ENCODE measurements at regions of chr6 and their contacts with region 1.

Region 1: GRCh38 chr6:149648148-149649145 is at the start of gene KATNA1:
- DNase-seq: peak; percentile 93
- H3K4me3 ChIP-seq: peak within 1 kb of the TSS; percentile 84
- H3K27ac ChIP-seq: peak within 1 kb of the TSS; percentile 98
- H3K4me1 ChIP-seq: peaks cover 58% of the 10 kb centered on the region
- CTCF ChIP-seq: 0 out of 2 replicates have a peak, but pooled peaks have one; percentile 21
- total RNA-seq, gene KATNA1: 35.1 and 40.9 TPM in 2 replicates

Region 2: GRCh38 chr6:149373511-149373910 is 274.9 kb before region 1 on chr6:
- CTCF ChIA-PET with region 1: no interaction called
- POLR2A ChIA-PET with region 1: no interaction called
- intact Hi-C with region 1: no loop called
- DNase-seq: no peak
- H3K4me3 ChIP-seq: no peak overlapping the region
- H3K27ac ChIP-seq: no peak overlapping the region
- H3K4me1 ChIP-seq: peaks cover 42% of the 10 kb centered on the region
- CTCF ChIP-seq: no peak

Region 3: GRCh38 chr6:149545754-149546528 is 102.5 kb before region 1 on chr6 and contains the start of gene PPIL4:
- CTCF ChIA-PET with region 1: no interaction called
- POLR2A ChIA-PET with region 1: interaction called, 5 read pairs
- intact Hi-C with region 1: loop called (anchors 1 kb)
- DNase-seq: peak; percentile 96
- H3K4me3 ChIP-seq: peak within 1 kb of the TSS; percentile 92
- H3K27ac ChIP-seq: peak within 1 kb of the TSS; percentile 86
- H3K4me1 ChIP-seq: peaks cover 26% of the 10 kb centered on the region
- CTCF ChIP-seq: peak; percentile 100
- total RNA-seq, gene PPIL4: 21.6 and 29.2 TPM in 2 replicates

Region 4: GRCh38 chr6:149660028-149660427 is 11.6 kb after region 1 on chr6:
- CTCF ChIA-PET with region 1: interaction called, 5 read pairs
- POLR2A ChIA-PET with region 1: interaction called, 14 read pairs
- intact Hi-C with region 1: no loop called
- DNase-seq: no peak
- H3K4me3 ChIP-seq: no peak overlapping the region
- H3K27ac ChIP-seq: no peak overlapping the region
- H3K4me1 ChIP-seq: no peaks in the 10 kb centered on the region
- CTCF ChIP-seq: no peak

Region 5: DNA sequence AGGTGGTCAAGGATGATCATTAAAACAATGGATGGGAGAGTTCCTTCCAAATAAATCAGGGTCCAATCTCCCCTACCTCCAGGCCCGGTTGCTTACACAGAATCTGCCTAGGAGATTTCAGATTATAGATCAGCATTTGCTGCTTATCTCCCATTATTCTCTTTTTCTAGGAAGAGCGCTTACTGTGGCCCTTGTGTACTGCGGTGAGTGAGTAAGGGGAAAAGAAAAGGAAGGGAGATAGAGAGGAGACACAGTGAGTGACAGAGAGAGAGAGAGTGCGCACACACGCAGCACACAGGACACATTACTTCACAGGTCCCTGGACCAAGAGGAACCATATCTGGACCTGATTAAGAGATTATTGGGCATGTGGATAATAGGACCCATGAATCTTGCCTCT is 63.3 kb after region 1 on chr6:
- CTCF ChIA-PET with region 1: no interaction called
- POLR2A ChIA-PET with region 1: no interaction called
- intact Hi-C with region 1: loop called (anchors 2 kb)
- DNase-seq: no peak
- H3K4me3 ChIP-seq: no peak overlapping the region
- H3K27ac ChIP-seq: no peak overlapping the region
- H3K4me1 ChIP-seq: peaks cover 42% of the 10 kb centered on the region
- CTCF ChIP-seq: no peak

Region 6: DNA sequence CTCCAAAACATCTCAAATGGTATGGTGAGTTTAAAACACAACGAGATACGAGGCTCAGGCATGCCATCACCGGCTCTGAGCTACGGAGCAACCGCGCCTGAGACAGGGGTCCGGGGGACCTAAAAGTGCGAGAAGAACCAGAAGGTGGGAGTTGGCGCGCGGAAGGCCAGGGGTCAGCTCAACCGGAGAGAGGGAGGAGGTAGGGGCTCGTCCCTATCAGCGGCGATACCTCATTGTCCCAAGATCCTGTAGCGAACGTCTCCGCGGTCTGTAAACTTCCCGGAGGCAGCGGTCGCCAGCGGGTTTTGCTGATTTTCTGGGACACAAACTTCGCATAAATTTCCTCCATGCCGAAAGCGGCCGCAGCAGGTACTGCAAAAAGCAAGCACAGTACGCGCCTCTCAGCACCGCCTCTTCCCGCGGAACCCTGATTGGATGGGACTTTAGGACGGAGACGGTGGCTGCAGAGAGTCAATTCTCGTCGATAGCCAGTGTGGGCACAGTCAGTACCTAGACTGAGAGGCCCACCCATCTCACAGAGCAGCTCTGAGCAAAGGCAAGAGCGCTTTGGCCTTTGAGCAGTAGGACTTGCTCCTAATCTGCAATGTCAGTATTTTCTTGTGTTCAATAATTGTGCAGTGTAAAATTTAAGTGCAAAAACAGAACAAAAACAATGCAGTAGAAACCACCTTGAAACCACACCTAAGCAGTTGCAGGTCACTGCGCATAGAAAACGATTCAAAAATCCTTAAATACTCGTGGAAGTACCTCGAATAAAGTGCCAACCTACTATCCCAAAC is 97.9 kb after region 1 on chr6 and contains the start of gene NUP43:
- CTCF ChIA-PET with region 1: no interaction called
- POLR2A ChIA-PET with region 1: interaction called, 3 read pairs
- intact Hi-C with region 1: loop called (anchors 5 kb)
- DNase-seq: peak; percentile 96
- H3K4me3 ChIP-seq: peak within 1 kb of the TSS; percentile 80
- H3K27ac ChIP-seq: peak within 1 kb of the TSS; percentile 74
- H3K4me1 ChIP-seq: peaks cover 24% of the 10 kb centered on the region
- CTCF ChIP-seq: peak; percentile 67
- total RNA-seq, gene NUP43: 28.6 and 30.7 TPM in 2 replicates